Mammary epithelial cell (primary cell): ENCODE measurements at regions of chr15 and their contacts with region 1.

Region 1: DNA sequence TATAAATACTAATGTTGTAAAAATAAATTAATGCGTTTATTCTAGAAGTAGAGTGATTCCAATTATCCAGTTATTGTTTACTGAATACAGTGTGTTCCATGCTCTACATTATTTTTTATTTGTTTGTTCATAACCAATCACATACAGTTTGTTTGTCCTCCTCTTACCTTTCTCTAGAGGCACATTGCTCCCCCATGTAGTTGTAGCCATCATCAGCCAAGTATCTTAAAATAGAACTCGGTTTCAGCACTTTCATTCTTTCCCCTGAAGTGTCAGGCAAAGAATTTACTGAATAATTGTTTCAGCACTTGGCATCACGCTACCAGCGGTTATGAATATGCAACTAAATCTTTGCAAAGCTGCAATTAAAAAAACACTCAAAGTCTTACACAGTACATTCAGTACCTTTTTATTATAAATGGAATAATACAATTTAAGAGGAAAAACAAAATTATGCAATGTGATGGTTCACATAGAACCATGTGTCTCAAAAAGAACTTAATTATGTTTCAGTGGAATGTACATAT is 448.6 kb upstream of the ATP10A start:
- DNase-seq: no peak
- H3K4me3 ChIP-seq: no peak overlapping the region
- H3K27ac ChIP-seq: no peak overlapping the region
- H3K4me1 ChIP-seq: no peaks in the 10 kb centered on the region
- H3K27me3 ChIP-seq: no peaks in the 10 kb centered on the region
- CTCF ChIP-seq: no peak

Region 2: DNA sequence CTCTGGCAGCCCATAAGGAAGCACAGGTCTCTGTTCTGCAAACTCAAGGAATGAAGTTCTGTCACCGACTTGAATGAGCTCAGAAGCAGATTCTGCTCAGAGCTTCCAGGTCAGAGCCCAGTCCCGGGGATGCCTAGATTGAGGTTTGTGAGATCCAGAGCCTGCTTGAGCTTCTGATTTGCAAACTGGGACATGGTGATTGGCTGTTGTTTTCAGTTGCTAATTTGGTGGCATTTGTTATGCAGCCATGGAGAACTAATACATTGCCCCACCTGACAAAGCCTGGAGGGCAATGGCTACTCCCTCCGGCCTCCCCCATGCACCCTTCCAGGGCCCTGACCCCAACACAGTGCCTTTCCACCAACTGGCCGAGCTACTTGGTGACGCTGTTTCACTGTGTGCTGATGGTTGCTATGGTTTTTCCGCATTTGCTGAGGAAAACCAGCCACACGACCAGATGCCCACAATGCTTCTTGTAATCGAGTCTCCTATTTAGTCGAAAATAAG is 69.2 kb before region 1 on chr15:
- CTCF ChIA-PET with region 1: no interaction called
- dilution Hi-C with region 1: loop called (anchors 10 kb)
- in situ Hi-C with region 1: no loop called
- intact Hi-C with region 1: no loop called
- DNase-seq: no peak
- H3K4me3 ChIP-seq: no peak overlapping the region
- H3K27ac ChIP-seq: no peak overlapping the region
- H3K4me1 ChIP-seq: no peaks in the 10 kb centered on the region
- H3K27me3 ChIP-seq: no peaks in the 10 kb centered on the region
- CTCF ChIP-seq: no peak

Region 3: DNA sequence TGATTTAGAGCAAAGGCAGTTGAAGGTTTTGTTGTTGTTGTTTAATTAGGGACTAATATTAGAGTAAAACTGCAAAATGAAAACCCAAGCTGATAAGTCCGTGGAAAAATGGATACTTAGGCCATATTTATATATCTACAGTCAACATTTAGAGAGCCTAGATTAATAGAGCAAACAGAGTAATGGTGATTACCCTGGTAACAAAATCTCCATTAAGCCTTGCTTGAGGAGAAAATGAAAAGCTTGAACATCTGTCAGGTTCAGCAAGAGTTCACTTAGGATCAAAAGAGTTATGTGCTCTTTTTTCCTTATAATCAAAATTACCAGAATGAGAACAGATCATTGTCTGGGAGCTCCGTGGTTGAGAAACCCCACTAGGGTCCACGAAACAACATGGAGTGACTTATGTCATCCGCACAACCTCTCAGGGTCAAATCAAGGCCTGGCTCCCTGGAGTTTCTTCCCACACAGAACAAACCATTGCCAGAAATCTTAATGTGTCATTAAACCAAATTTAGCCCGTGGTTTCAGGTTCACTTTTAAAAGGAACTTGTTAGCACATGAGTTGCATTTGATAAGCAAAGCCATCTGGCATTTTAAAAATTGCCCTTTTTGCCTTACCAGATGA is 79.9 kb after region 1 on chr15:
- CTCF ChIA-PET with region 1: no interaction called
- dilution Hi-C with region 1: no loop called
- in situ Hi-C with region 1: no loop called
- intact Hi-C with region 1: no loop called
- DNase-seq: no peak
- H3K4me3 ChIP-seq: no peak overlapping the region
- H3K27ac ChIP-seq: no peak overlapping the region
- H3K4me1 ChIP-seq: no peaks in the 10 kb centered on the region
- H3K27me3 ChIP-seq: no peaks in the 10 kb centered on the region
- CTCF ChIP-seq: no peak